Common myeloid progenitor, CD34-positive (primary cell): ENCODE measurements at regions of chr3 and their contacts with region 1.

Region 1: DNA sequence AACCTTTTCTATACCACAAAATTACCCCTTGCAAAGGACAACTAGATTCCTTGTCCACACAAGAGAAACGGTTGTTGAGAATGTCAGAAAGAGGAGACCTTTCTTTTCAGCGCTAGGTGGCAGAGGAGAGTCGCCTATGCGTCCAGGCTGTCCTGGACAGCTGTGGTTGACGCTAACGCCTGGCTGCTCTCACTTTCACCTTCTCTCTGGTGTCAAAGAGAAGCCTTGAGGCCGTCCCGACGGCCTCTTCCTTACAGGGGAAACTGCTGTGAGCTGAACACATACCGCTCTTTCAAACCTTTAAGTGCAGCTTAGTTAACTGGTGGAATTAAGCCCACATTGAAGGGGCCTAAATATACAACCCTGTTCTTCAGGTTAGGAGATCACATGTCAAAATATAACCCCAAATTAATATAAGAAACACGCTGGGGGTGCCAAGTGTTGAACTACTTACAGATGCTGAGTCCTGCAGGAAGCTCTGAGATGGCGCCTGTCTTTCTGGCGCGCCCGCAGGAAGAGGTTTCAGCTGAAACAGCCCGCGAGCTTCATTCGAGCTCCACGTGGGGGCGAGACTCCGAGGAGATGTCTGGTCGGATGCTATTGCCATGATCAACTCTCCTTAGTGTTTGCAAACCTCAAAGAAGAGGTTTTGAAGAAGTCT is 26.1 kb upstream of the KBTBD8 start:
- DNase-seq: peak; percentile 63 to 82 (median 79)
- H3K4me3 ChIP-seq: peak overlapping the region; percentile 26 to 78 (median 60)
- H3K27ac ChIP-seq: peak overlapping the region in 1 of 2 experiments; percentile 19
- H3K4me1 ChIP-seq: peaks cover 3 to 12% (median 6%) of the 10 kb centered on the region in 4 experiments
- H3K27me3 ChIP-seq: peaks cover 0 to 2% (median 0%) of the 10 kb centered on the region in 5 experiments

Region 2: GRCh38 chr3:66822186-66823008 is 149.6 kb before region 1 on chr3:
- CTCF ChIA-PET with region 1: no interaction called
- POLR2A ChIA-PET with region 1: no interaction called
- DNase-seq: peak; percentile 57 to 79 (median 71)
- H3K4me3 ChIP-seq: no peak overlapping the region
- H3K27ac ChIP-seq: no peak overlapping the region
- H3K4me1 ChIP-seq: no peaks in the 10 kb centered on the region
- H3K27me3 ChIP-seq: peaks cover 0 to 3% (median 0%) of the 10 kb centered on the region in 5 experiments

Region 3: GRCh38 chr3:66910266-66911055 is 61.6 kb before region 1 on chr3:
- CTCF ChIA-PET with region 1: no interaction called
- POLR2A ChIA-PET with region 1: no interaction called
- DNase-seq: no peak
- H3K4me3 ChIP-seq: no peak overlapping the region
- H3K27ac ChIP-seq: no peak overlapping the region
- H3K4me1 ChIP-seq: no peaks in the 10 kb centered on the region
- H3K27me3 ChIP-seq: no peaks in the 10 kb centered on the region

Region 4: DNA sequence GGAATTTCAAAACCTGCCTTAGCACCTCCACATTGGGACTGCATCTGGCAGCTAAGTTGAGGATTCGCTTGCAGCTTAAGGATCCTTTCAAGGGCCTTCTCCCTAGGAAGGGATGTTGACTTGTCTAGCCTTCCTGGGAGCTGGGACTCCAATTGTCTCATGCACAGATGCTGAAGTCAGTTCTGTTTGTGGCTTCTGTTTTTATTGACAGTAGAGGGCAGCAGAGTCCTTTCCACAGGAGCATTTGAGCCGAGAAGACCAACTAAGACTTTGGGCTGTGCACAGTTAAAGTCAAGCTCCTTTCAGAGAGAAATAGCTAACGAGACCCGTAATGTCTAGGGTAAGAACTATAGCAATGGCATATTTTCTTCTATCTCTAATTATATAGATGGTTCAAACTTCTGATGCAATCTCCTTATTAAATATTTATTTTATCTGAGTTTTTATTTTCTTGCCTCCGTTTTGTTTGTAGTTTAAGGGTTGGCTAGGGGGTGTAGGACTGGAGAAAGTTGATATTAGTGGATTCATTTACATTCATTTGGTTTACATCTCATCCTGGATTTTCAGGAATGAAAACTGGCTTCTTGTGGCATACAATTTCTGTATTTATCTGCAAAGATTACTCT is 33.6 kb before region 1 on chr3:
- CTCF ChIA-PET with region 1: interaction called, 12 read pairs
- POLR2A ChIA-PET with region 1: no interaction called
- DNase-seq: peak; percentile 35 to 76 (median 67)
- H3K4me3 ChIP-seq: no peak overlapping the region
- H3K27ac ChIP-seq: no peak overlapping the region
- H3K4me1 ChIP-seq: no peaks in the 10 kb centered on the region
- H3K27me3 ChIP-seq: peaks cover 0 to 3% (median 0%) of the 10 kb centered on the region in 5 experiments

Region 5: GRCh38 chr3:66952357-66952756 is 19.7 kb before region 1 on chr3:
- CTCF ChIA-PET with region 1: interaction called, 14 read pairs
- POLR2A ChIA-PET with region 1: no interaction called
- DNase-seq: no peak
- H3K4me3 ChIP-seq: no peak overlapping the region
- H3K27ac ChIP-seq: no peak overlapping the region
- H3K4me1 ChIP-seq: no peaks in the 10 kb centered on the region
- H3K27me3 ChIP-seq: peaks cover 0 to 3% (median 0%) of the 10 kb centered on the region in 5 experiments

Region 6: GRCh38 chr3:66989860-66990665 is 18.0 kb after region 1 on chr3:
- CTCF ChIA-PET with region 1: interaction called, 43 read pairs
- POLR2A ChIA-PET with region 1: no interaction called
- DNase-seq: peak; percentile 32 to 64 (median 56)
- H3K4me3 ChIP-seq: no peak overlapping the region
- H3K27ac ChIP-seq: no peak overlapping the region
- H3K4me1 ChIP-seq: no peaks in the 10 kb centered on the region
- H3K27me3 ChIP-seq: no peaks in the 10 kb centered on the region

Region 7: DNA sequence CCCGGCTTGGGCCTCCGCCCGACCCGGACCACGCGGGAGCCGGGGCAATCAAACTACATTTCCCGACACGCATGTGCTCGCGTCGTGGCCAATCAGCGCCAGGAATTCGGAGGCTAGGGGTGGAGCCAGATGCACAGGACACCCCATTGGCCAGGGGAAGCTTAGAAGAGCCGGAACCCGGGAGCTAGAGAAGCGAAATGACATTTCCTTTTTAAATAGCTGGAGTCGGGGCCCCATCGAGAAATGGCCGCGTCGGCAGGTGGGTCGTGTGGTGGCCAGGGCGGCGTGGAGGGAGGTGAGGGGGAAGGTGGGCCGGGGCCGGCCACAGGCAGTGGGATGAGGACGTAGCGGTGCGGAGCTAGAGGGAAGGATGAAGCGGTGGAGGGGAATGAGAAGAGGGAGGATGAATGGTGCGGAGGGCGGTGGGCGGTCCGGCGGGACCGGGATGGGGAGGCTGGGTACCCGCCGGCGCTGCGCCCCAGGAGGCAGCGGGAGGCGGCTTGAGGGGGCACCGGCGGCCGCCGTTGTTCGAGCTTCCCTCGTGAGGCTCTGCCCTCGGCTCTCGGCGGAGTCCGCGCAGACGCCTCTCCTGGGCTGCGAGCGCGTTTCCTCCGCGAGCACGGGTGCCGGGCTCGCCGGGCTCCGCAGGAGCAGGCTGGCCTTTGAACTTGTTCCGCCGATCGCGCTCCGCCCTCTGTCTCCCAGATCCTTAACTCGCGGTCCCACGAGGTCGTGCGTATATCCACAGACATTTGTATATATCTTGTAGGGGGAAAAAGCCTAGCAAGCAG is 26.3 kb after region 1 on chr3 and contains the start of gene KBTBD8:
- CTCF ChIA-PET with region 1: interaction called, 12 read pairs
- POLR2A ChIA-PET with region 1: no interaction called
- DNase-seq: peak; percentile 98 to 99 (median 99)
- H3K4me3 ChIP-seq: peak within 1 kb of the TSS; percentile 77 to 90 (median 83)
- H3K27ac ChIP-seq: peak within 1 kb of the TSS in 1 of 2 experiments; percentile 30
- H3K4me1 ChIP-seq: peaks cover 9 to 37% (median 18%) of the 10 kb centered on the region in 4 experiments
- H3K27me3 ChIP-seq: no peaks in the 10 kb centered on the region

Region 8: GRCh38 chr3:67037615-67038014 is 65.6 kb after region 1 on chr3:
- CTCF ChIA-PET with region 1: interaction called, 44 read pairs
- POLR2A ChIA-PET with region 1: no interaction called
- DNase-seq: peak in 2 of 3 donors; percentile 28 to 38
- H3K4me3 ChIP-seq: no peak overlapping the region
- H3K27ac ChIP-seq: no peak overlapping the region
- H3K4me1 ChIP-seq: peaks cover 0 to 4% (median 0%) of the 10 kb centered on the region in 4 experiments
- H3K27me3 ChIP-seq: no peaks in the 10 kb centered on the region

Region 9: GRCh38 chr3:67113802-67114407 is 141.9 kb after region 1 on chr3:
- CTCF ChIA-PET with region 1: interaction called, 21 read pairs
- POLR2A ChIA-PET with region 1: no interaction called
- DNase-seq: peak; percentile 73 to 91 (median 87)
- H3K4me3 ChIP-seq: no peak overlapping the region
- H3K27ac ChIP-seq: no peak overlapping the region
- H3K4me1 ChIP-seq: no peaks in the 10 kb centered on the region
- H3K27me3 ChIP-seq: no peaks in the 10 kb centered on the region